AG04450 (cell line): ENCODE measurements at regions of chr10 and their contacts with region 1.

Region 1: DNA sequence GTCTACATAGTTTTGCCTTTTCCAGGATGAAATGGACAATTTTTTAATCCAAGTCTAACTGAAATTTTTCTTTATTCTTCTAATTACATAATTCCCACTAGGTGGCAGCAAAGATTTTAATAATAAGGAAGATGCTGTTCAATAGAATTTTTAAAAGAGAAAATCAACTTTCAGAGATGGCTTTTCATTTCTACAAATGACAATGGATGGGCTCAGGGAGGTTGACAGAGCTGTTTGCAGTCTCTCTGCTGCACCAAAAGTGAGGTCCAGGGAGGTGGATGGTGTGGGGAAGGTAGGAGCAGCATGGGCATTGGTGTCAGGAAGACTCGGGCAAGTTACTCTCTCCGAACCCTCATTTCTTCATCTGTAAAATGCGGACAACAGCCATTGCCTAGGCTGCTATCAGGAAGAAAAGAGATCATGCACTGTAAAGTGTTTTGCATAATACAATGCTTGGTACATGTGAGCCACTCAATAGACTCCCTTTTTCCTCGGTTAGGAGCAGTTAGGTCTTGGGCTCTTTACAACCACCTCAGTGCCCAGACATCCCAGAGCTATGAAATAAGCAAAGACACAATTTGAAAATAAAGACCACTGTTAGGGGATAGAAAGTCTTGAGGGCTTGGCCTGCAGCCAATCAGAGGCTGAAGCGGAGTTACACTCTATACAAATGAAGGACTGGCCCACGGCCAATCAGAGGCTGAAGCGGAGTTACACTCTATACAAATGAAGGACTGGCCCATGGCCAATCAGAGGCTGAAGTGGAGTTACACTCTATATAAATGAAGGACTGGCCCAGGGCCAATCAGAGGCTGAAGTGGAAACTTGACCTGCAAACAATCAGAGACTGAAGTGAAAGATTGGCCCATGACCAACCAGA is 107.1 kb downstream of the ABLIM1 start:
- DNase-seq: no peak
- H3K4me3 ChIP-seq: peak overlapping the region; percentile 43
- H3K27ac ChIP-seq: no peak overlapping the region
- H3K27me3 ChIP-seq: peaks cover 5% of the 10 kb centered on the region
- CTCF ChIP-seq: peak; percentile 39

Region 2: GRCh38 chr10:114486938-114487814 is 63.8 kb before region 1 on chr10:
- CTCF ChIA-PET with region 1: no interaction called
- POLR2A ChIA-PET with region 1: no interaction called
- DNase-seq: peak; percentile 30
- H3K4me3 ChIP-seq: no peak overlapping the region
- H3K27ac ChIP-seq: no peak overlapping the region
- H3K27me3 ChIP-seq: peaks cover 2% of the 10 kb centered on the region
- CTCF ChIP-seq: no peak

Region 3: GRCh38 chr10:114698271-114699061 is 147.5 kb after region 1 on chr10:
- CTCF ChIA-PET with region 1: interaction called, 73 read pairs
- POLR2A ChIA-PET with region 1: interaction called, 4 read pairs
- DNase-seq: no peak
- H3K4me3 ChIP-seq: no peak overlapping the region
- H3K27ac ChIP-seq: no peak overlapping the region
- H3K27me3 ChIP-seq: no peaks in the 10 kb centered on the region
- CTCF ChIP-seq: no peak

Region 4: GRCh38 chr10:114779803-114780609 is 229.0 kb after region 1 on chr10:
- CTCF ChIA-PET with region 1: interaction called, 65 read pairs
- POLR2A ChIA-PET with region 1: no interaction called
- DNase-seq: peak; percentile 59
- H3K4me3 ChIP-seq: no peak overlapping the region
- H3K27ac ChIP-seq: peak overlapping the region; percentile 62
- H3K27me3 ChIP-seq: no peaks in the 10 kb centered on the region
- CTCF ChIP-seq: no peak